ENCODE measurements at regions of chr17 and their contacts with region 1.

Region 1: DNA sequence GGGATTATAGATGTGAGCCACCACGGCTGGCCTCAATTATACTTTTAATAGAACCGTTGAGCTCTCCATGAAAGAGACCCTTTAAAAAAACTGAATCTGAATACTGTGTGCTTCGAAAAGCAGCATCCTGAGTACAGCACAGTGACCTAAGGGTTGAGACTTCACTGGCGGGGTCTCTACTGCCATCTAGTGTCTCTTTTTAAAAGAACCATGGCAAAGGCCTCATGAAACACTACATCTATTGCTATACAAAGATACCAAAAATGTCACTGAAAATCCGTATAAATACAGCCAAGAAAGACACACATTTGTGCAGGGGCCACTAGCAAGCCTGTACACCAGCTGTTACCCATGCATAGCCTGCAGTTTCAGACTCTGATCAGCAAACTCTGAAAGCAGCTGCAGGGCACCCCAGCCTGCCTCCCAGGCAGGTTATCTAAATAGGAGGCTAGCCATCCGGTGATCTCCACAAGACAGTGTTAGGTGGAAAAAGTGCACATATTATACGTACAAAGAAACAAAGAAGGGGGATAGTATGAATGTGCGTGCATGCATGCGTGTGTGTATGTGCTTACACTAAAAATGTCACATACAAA is 35.3 kb downstream of the NPLOC4 start:
- DNase-seq: peak; percentile 78
- ATAC-seq: peak; percentile 96
- H3K4me3 ChIP-seq: no peak overlapping the region
- H3K27ac ChIP-seq: no peak overlapping the region
- H3K4me1 ChIP-seq: peaks cover 3% of the 10 kb centered on the region; the same call in 1 of the 2 replicates
- H3K27me3 ChIP-seq: no peaks in the 10 kb centered on the region
- CTCF ChIP-seq: peak; percentile 85
- POLR2A ChIP-seq: 0 out of 2 replicates have a peak, but pooled peaks have one; percentile 31
- RAD21 ChIP-seq: peak; percentile 88

Region 2: DNA sequence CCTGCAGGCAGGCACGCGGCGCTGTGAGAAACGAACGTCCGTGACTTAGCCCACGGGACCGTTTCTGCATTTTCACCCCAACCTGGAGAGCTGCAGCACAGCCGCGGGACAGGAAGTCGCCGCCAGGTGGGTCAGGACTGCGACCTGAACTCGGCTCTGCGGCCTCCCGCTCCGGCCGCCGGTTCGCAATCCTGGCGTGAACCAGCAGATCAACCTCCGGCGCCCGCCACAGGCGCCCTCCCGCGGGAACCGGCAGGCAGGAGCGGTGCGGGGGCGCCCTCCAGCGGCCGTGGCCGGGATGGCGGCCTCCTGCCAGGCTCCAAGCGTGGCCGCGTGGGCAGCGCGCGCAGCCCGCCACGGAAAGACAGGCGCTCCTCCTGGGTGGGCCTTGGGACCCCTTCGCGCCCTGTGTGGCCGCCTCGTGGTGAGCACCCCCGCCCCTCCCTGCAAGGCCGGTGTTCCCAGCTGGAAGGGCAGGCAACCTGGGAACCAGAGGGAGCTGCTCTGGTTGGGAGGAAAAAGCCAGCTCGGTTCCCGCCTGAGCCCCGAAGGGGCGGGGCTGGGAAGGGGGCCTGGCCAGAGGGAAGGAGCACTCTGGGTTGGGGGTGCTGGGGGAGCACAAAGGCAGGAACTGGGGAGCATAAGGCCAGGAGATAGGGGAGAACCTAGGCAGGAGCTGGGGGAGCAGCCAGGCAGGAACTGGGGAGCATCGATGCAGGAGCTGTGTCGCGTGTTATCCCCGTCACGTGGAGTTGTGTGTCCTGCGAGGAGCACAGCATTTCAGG is 117.2 kb before region 1 on chr17:
- CTCF ChIA-PET with region 1: no interaction called
- POLR2A ChIA-PET with region 1: no interaction called
- dilution Hi-C with region 1: no loop called
- in situ Hi-C with region 1: no loop called
- intact Hi-C with region 1: no loop called
- DNase-seq: peak; percentile 71
- ATAC-seq: peak; percentile 79
- H3K4me3 ChIP-seq: peak overlapping the region; percentile 45
- H3K27ac ChIP-seq: peak overlapping the region; percentile 50; the same call in 1 of the 2 replicates
- H3K4me1 ChIP-seq: peaks cover 14% of the 10 kb centered on the region
- H3K27me3 ChIP-seq: no peaks in the 10 kb centered on the region
- CTCF ChIP-seq: peak; percentile 99
- POLR2A ChIP-seq: no peak
- RAD21 ChIP-seq: peak; percentile 97

Region 3: GRCh38 chr17:81519284-81519955 is 82.2 kb before region 1 on chr17:
- CTCF ChIA-PET with region 1: no interaction called
- POLR2A ChIA-PET with region 1: no interaction called
- dilution Hi-C with region 1: no loop called
- in situ Hi-C with region 1: no loop called
- intact Hi-C with region 1: loop called (anchors 1 kb)
- DNase-seq: no peak
- ATAC-seq: no peak
- H3K4me3 ChIP-seq: peak overlapping the region; percentile 33
- H3K27ac ChIP-seq: no peak overlapping the region; the same call in 1 of the 2 replicates
- H3K4me1 ChIP-seq: peaks cover 37% of the 10 kb centered on the region
- H3K27me3 ChIP-seq: no peaks in the 10 kb centered on the region
- CTCF ChIP-seq: peak; percentile 31; the same call in 1 of the 2 replicates
- POLR2A ChIP-seq: no peak
- RAD21 ChIP-seq: no peak

Region 4: DNA sequence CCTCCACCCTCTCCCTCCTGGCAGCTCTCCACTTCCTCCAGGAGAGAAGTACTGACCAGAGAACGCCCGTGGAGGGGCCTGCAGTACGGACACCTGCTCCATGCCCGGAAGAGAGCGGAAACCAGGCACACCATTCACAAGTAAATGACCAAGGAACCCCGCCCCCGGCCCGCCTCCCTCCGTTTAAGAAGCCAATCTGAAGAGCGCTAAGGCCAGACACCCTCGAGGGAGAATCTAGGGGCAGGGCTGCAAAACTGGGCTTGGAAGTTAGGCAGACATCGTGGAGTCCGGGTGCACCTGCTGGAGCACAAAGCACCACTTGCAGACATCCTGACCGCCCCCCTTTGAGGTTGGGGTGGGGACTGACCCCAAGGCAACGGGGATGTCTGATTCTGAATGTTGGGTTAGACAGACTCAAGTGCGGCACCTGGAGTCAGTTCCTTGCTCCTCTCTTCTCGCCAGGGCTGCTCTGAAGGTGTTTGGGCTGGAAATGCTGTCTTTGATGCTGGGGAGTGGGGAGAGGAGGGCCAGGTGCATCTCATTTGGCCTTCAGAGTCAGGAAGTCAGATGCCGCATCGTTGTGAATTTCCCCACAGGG is 48.5 kb before region 1 on chr17:
- CTCF ChIA-PET with region 1: interaction called, 8 read pairs
- POLR2A ChIA-PET with region 1: no interaction called
- dilution Hi-C with region 1: no loop called
- in situ Hi-C with region 1: no loop called
- intact Hi-C with region 1: loop called (anchors 1 kb)
- DNase-seq: peak; percentile 66
- ATAC-seq: peak; percentile 63
- H3K4me3 ChIP-seq: peak overlapping the region; percentile 100
- H3K27ac ChIP-seq: peak overlapping the region; percentile 77
- H3K4me1 ChIP-seq: peaks cover 22% of the 10 kb centered on the region
- H3K27me3 ChIP-seq: no peaks in the 10 kb centered on the region
- CTCF ChIP-seq: no peak
- POLR2A ChIP-seq: peak; percentile 24; the same call in 1 of the 2 replicates
- RAD21 ChIP-seq: no peak

Region 5: GRCh38 chr17:81902023-81902652 is 300.5 kb after region 1 on chr17 and contains the start of gene NPB:
- CTCF ChIA-PET with region 1: no interaction called
- POLR2A ChIA-PET with region 1: no interaction called
- dilution Hi-C with region 1: no loop called
- in situ Hi-C with region 1: no loop called
- intact Hi-C with region 1: no loop called
- DNase-seq: no peak
- ATAC-seq: peak; percentile 67
- H3K4me3 ChIP-seq: peak within 1 kb of the TSS; percentile 51
- H3K27ac ChIP-seq: no peak within 1 kb of the TSS
- H3K4me1 ChIP-seq: peaks cover 14% of the 10 kb centered on the region
- H3K27me3 ChIP-seq: no peaks in the 10 kb centered on the region
- CTCF ChIP-seq: no peak
- POLR2A ChIP-seq: no peak
- RAD21 ChIP-seq: no peak
- total RNA-seq, gene NPB: under 0.01 TPM in 1 of 2 replicates, not detected in the other

Region 6: DNA sequence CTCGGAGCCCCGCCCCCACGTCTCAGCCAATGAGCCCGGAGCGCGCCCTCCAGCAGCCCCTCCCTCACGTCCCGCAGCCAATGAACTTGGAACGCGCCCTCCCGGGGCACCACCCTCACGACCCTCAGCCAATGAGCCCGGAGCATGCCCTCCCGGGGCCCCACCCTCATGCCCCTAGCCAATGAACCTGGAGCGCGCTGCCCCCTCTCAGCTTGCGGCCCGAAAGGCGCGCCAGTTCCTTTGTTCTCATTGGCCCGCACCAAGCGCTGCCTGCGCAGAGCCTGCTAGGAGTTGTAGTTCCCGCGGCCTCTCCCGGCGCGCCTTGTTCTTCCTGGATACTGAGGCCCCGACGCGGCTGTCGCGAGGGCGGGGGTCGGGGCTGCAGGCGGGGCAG is 421.4 kb after region 1 on chr17 and contains the start of gene LRRC45:
- CTCF ChIA-PET with region 1: no interaction called
- POLR2A ChIA-PET with region 1: no interaction called
- dilution Hi-C with region 1: no loop called
- in situ Hi-C with region 1: no loop called
- intact Hi-C with region 1: no loop called
- DNase-seq: peak; percentile 99
- ATAC-seq: peak; percentile 95
- H3K4me3 ChIP-seq: peak within 1 kb of the TSS; percentile 92
- H3K27ac ChIP-seq: peak within 1 kb of the TSS; percentile 51; the same call in 1 of the 2 replicates
- H3K4me1 ChIP-seq: peaks cover 13% of the 10 kb centered on the region
- H3K27me3 ChIP-seq: no peaks in the 10 kb centered on the region
- CTCF ChIP-seq: no peak
- POLR2A ChIP-seq: no peak
- RAD21 ChIP-seq: no peak
- total RNA-seq, gene LRRC45: 7.2 and 7.8 TPM in 2 replicates

Measured in IMR-90 (cell line).